ENCODE measurements at regions of chr2 and their contacts with region 1.

Region 1: GRCh38 chr2:199704358-199705238 is 146.4 kb downstream of the FTCDNL1 start:
- DNase-seq: peak in 4 of 10 donors; percentile 8 to 50 (median 26)

Region 2: DNA sequence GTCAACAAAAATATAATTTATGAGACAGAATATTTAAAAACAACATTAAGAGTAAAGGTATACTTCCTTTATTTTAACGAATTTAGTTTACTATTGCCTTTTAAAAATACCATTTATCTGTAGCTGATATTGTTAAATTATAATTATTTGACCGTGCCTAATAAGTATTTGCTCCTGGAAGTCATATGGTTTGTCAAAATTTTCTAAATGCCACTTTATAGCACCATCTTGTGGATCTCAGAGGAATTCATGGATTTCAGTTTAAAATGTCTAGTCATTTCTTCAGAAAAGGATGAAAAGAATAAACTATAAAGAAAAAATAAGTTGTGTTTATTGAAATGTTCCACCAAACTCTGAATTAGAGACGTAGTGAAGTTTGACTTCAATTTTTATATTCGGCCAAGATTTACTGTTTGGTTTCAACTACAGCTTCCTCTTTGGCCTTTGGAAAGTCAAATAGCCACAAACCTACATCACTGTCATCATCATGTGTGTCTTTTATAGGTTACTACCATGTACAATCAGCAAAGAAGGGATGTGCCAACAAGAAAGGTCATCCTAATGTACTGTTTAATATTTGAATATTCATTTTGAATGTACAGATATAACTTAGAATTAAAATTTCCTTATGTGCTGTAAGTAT is 156.7 kb after region 1 on chr2:
- intact Hi-C with region 1: loop called (anchors 1 kb)
- DNase-seq: no peak

Region 3: DNA sequence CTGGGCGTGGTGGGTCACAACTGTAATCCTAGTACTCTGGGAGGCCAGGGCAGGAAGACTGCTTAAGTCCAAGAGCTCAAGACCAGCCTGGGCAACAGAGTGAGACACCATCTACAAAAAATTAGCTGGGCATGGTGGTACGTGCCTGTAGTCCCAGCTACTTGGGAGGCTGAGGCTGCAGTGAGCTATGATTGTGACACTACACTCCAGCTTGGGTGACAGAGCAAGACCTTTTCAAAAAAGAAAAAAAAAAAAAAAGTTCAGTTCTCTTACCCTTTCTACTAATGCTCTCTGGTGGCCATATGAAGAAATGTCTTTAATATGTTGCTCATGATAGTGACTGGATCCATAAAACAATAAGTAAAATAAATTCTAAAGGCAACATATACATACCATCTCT is 235.8 kb after region 1 on chr2:
- intact Hi-C with region 1: loop called (anchors 10 kb)
- DNase-seq: peak in 1 of 10 donors; percentile 12